Activated CD8-positive, alpha-beta T cell treated with anti-CD3 and anti-CD28 coated beads for 36 hours (primary cell): ENCODE measurements at regions of chr17 and their contacts with region 1.

Region 1: GRCh38 chr17:7045909-7046724 is 2.2 kb upstream of the SLC16A11 start:
- DNase-seq: peak; percentile 66
- ATAC-seq: peak; percentile 18
- H3K4me3 Mint-ChIP-seq: peak overlapping the region; percentile 73
- H3K27ac Mint-ChIP-seq: peak overlapping the region; percentile 86
- H3K4me1 Mint-ChIP-seq: peaks cover 38% of the 10 kb centered on the region
- H3K27me3 Mint-ChIP-seq: peaks cover 2% of the 10 kb centered on the region
- CTCF ChIP-seq: peak; percentile 85

Region 2: GRCh38 chr17:7021993-7022778 is 23.9 kb before region 1 on chr17:
- CTCF ChIA-PET with region 1: interaction called, 14 read pairs
- POLR2A ChIA-PET with region 1: interaction called, 4 read pairs
- intact Hi-C with region 1: no loop called
- DNase-seq: peak; percentile 88
- ATAC-seq: peak; percentile 78
- H3K4me3 Mint-ChIP-seq: peak overlapping the region; percentile 72
- H3K27ac Mint-ChIP-seq: peak overlapping the region; percentile 63
- H3K4me1 Mint-ChIP-seq: peaks cover 45% of the 10 kb centered on the region
- H3K27me3 Mint-ChIP-seq: no peaks in the 10 kb centered on the region
- CTCF ChIP-seq: peak; percentile 95

Region 3: GRCh38 chr17:7035591-7036368 is 10.3 kb before region 1 on chr17 and contains the start of gene SLC16A13:
- CTCF ChIA-PET with region 1: interaction called, 16 read pairs
- POLR2A ChIA-PET with region 1: interaction called, 8 read pairs
- intact Hi-C with region 1: no loop called
- DNase-seq: peak; percentile 99
- ATAC-seq: peak; percentile 95
- H3K4me3 Mint-ChIP-seq: peak within 1 kb of the TSS; percentile 93
- H3K27ac Mint-ChIP-seq: peak within 1 kb of the TSS; percentile 96
- H3K4me1 Mint-ChIP-seq: peaks cover 47% of the 10 kb centered on the region
- H3K27me3 Mint-ChIP-seq: no peaks in the 10 kb centered on the region
- CTCF ChIP-seq: no peak
- total RNA-seq, gene SLC16A13: 4.8 to 5.9 TPM

Region 4: DNA sequence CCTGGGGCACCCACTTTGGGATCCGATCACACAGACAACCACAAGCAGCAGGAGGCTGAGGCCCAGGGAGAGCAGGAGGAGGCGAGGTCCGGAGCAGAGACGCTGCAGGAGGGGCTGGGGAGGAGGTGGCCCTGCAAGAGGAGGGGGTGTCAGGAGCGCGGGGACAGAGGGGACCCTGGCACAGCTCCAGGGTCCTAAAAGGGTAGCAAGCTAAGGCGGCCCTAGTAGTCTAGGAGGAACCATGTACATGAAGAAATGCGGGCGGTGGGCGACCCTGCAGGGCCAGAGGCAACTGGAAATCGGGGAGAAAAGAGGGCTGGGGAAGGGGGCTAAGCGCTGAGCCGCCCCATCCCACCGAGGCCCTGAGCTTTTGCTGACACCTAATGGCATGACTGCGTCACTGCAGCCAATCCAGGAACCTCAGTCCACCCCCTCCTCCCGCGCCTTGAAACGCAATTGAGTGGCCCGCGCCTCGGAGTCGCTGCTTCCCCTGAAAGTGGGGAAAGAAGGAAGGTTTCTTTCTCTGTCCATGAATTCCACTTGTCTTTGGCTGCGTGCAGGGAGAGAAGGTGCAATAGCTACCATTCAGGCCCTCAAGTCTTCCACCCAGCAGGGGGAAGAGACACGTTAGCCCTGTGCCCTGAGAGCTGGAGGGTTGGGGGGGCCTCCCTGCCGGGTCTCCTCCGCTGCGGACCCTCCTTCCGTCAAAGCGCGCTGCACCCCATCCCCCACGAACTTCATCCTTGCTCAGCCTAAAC is 131.3 kb after region 1 on chr17:
- CTCF ChIA-PET with region 1: interaction called, 50 read pairs
- POLR2A ChIA-PET with region 1: interaction called, 8 read pairs
- intact Hi-C with region 1: no loop called
- DNase-seq: peak; percentile 75
- ATAC-seq: peak; percentile 83
- H3K4me3 Mint-ChIP-seq: peak overlapping the region; percentile 70
- H3K27ac Mint-ChIP-seq: no peak overlapping the region
- H3K4me1 Mint-ChIP-seq: peaks cover 12% of the 10 kb centered on the region
- H3K27me3 Mint-ChIP-seq: peaks cover 12% of the 10 kb centered on the region
- CTCF ChIP-seq: peak; percentile 90

Region 5: GRCh38 chr17:7296189-7296902 is 250.2 kb after region 1 on chr17:
- CTCF ChIA-PET with region 1: interaction called, 21 read pairs
- POLR2A ChIA-PET with region 1: no interaction called
- intact Hi-C with region 1: no loop called
- DNase-seq: peak; percentile 70
- ATAC-seq: peak; percentile 35
- H3K4me3 Mint-ChIP-seq: no peak overlapping the region
- H3K27ac Mint-ChIP-seq: no peak overlapping the region
- H3K4me1 Mint-ChIP-seq: peaks cover 14% of the 10 kb centered on the region
- H3K27me3 Mint-ChIP-seq: peaks cover 23% of the 10 kb centered on the region
- CTCF ChIP-seq: peak; percentile 99